Activated CD8-positive, alpha-beta memory T cell treated with anti-CD3 and anti-CD28 coated beads, Interleukin-2, amount 10 ng/mL, durations not matched to agents 7 days and 5 days (primary cell): ENCODE measurements at regions of chr2 and their contacts with region 1.

Region 1: GRCh38 chr2:96131152-96131812 is 7.0 kb downstream of the ASTL start:
- DNase-seq: peak; percentile 71
- ATAC-seq: peak; percentile 59
- H3K4me3 Mint-ChIP-seq: no peak overlapping the region
- H3K27ac Mint-ChIP-seq: peak overlapping the region; percentile 77
- H3K4me1 Mint-ChIP-seq: peaks cover 32% of the 10 kb centered on the region
- H3K27me3 Mint-ChIP-seq: no peaks in the 10 kb centered on the region

Region 2: DNA sequence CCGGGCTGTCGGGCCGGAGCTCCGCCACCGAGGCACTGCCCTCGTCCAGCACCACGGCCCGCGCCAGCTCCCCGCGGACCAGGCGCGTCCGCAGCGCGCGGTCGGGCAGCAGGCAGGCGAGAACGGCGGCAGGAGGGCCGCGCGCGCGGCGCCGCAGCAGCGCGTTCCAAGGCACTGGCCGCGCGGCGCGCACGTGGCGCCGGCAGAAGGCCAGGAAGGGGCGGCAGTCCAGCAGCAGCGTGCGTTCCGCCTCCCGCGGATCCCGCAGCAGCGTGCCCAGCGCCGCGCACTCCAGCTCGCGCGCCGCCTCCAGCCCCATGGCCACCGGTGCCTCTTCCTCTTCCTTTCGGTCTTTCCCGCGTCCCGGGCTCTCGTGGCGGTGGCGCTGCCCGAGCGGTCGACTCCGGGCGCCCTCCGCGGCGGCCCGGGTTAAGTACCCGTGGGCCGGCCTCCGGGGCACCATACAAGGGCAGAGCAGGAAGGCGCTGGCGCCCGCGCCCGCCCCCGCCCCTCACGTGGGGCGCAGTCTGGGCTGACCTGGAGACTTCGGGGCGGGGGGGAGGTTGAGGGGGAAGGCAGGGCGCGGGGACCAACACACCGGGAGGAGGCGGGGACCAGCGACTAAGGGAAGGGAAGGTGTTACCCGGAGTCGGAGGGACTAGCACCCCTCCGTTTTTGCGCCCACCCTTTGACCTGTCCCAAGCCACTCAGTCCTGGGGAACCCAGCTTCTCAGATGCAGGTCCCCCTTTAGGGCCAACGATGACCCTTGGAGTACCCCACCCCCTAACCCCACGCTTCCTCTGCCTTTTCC is 14.0 kb after region 1 on chr2 and contains the start of gene DUSP2:
- CTCF ChIA-PET with region 1: interaction called, 13 read pairs
- DNase-seq: peak; percentile 94
- ATAC-seq: peak; percentile 73
- H3K4me3 Mint-ChIP-seq: peak within 1 kb of the TSS; percentile 84
- H3K27ac Mint-ChIP-seq: peak within 1 kb of the TSS; percentile 91
- H3K4me1 Mint-ChIP-seq: peaks cover 65% of the 10 kb centered on the region
- H3K27me3 Mint-ChIP-seq: no peaks in the 10 kb centered on the region
- total RNA-seq, gene DUSP2: 32.0 to 53.6 TPM

Region 3: DNA sequence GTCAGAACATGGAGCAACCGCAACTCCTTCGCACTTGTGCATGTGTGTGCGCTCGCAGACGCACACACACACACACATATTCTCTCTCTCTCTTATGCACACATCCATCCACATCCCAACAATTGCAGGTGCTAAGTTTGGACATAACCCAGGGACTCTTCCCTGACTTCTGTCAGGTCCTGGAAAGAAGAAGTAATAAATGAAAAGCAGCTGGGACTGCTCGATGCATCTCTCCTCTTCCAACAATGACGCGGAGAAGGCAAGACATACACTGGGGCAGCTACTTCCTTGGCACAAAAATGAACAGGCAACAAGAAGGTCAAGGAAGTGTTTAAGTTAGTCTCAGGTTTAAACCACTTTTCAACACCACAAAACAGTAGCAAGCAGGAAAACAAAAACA is 53.7 kb after region 1 on chr2:
- CTCF ChIA-PET with region 1: no interaction called
- DNase-seq: no peak
- ATAC-seq: no peak
- H3K4me3 Mint-ChIP-seq: no peak overlapping the region
- H3K27ac Mint-ChIP-seq: no peak overlapping the region
- H3K4me1 Mint-ChIP-seq: peaks cover 11% of the 10 kb centered on the region
- H3K27me3 Mint-ChIP-seq: no peaks in the 10 kb centered on the region